ENCODE measurements at regions of chr4 and their contacts with region 1.

Region 1: GRCh38 chr4:107896158-107897045 is 34.9 kb upstream of the CYP2U1 start:
- H3K4me3 Mint-ChIP-seq: no peak overlapping the region
- H3K27ac Mint-ChIP-seq: no peak overlapping the region
- H3K4me1 Mint-ChIP-seq: peaks cover 24% of the 10 kb centered on the region
- H3K27me3 Mint-ChIP-seq: no peaks in the 10 kb centered on the region

Region 2: DNA sequence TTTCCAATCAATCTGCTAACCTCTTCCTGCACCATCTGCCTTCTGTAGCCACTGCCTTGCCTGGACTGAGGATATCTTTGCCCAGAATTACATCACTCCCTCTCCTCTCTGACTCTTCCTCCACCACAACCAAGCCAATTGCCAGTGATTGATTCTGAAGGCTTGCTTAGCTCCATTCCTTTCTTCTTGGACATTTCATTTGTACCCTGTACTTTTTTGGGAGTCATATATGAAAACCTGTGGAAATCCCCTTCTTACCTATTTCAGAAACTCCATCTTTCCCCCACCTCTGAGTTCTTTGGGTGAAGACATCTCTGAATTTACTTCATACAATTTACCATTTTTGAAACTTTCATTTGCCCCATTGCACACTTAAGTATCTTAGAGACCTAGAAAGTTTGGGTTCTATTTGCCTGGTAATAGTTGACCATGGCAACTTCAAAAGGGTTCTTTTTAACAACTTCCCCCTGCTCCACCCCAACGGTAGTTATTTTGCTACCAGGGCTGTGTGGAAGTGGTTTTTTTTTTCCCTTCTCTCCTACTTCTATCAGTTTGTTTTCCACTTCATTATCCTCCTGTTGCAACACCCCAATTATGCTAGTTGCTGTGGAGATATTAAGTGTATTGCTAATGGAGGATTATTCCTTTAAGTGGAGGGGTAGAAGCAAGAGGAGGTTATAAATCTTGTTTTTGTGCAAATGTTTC is 57.4 kb before region 1 on chr4:
- intact Hi-C with region 1: loop called (anchors 5 kb)
- H3K4me3 Mint-ChIP-seq: no peak overlapping the region
- H3K27ac Mint-ChIP-seq: no peak overlapping the region
- H3K4me1 Mint-ChIP-seq: peaks cover 40% of the 10 kb centered on the region
- H3K27me3 Mint-ChIP-seq: no peaks in the 10 kb centered on the region

Measured in dendritic cell treated with granulocyte-macrophage colony-stimulating factor and Interleukin-4, amounts not matched to agents 40 ng/mL and 50 ng/mL, for 4 days (primary cell).